Breast epithelium (tissue), 4 donors: ENCODE measurements at regions of chr17 and their contacts with region 1.

Region 1: GRCh38 chr17:27367121-27367991 is 73.4 kb downstream of the WSB1 start:
- DNase-seq: no peak
- H3K4me3 ChIP-seq: no peak overlapping the region
- H3K27ac ChIP-seq: no peak overlapping the region
- H3K4me1 ChIP-seq: no peaks in the 10 kb centered on the region
- H3K27me3 ChIP-seq: no peaks in the 10 kb centered on the region
- CTCF ChIP-seq: no peak
- POLR2A ChIP-seq: no peak

Region 2: GRCh38 chr17:27423651-27424050 is 56.3 kb after region 1 on chr17:
- intact Hi-C with region 1: no loop called
- DNase-seq: no peak
- H3K4me3 ChIP-seq: no peak overlapping the region
- H3K27ac ChIP-seq: no peak overlapping the region
- H3K4me1 ChIP-seq: no peaks in the 10 kb centered on the region
- H3K27me3 ChIP-seq: no peaks in the 10 kb centered on the region
- CTCF ChIP-seq: no peak
- POLR2A ChIP-seq: no peak

Region 3: DNA sequence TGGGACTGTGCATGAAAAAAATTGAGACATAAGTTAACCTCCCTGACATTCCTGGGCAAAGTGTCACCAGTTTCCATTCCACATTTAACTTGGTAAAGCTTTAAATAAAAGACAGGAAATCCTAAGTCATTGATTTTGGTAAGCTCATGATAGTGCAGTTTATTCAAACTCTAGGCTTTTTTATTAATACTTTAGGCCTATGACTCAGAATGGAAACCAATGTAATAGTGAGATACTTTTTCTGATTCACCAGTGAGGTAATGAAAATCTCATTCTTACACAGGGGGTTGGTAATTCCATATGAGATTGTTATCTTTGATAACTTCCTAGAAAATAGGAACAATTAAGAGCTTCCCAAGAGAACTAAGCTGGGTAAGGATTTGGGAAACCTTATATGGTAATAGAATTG is 766.2 kb after region 1 on chr17:
- intact Hi-C with region 1: loop called (anchors 10 kb)
- DNase-seq: no peak
- H3K4me3 ChIP-seq: no peak overlapping the region
- H3K27ac ChIP-seq: no peak overlapping the region
- H3K4me1 ChIP-seq: no peaks in the 10 kb centered on the region
- H3K27me3 ChIP-seq: no peaks in the 10 kb centered on the region
- CTCF ChIP-seq: no peak
- POLR2A ChIP-seq: no peak